CD8-positive, alpha-beta T cell (primary cell): ENCODE measurements at regions of chr12 and their contacts with region 1.

Region 1: DNA sequence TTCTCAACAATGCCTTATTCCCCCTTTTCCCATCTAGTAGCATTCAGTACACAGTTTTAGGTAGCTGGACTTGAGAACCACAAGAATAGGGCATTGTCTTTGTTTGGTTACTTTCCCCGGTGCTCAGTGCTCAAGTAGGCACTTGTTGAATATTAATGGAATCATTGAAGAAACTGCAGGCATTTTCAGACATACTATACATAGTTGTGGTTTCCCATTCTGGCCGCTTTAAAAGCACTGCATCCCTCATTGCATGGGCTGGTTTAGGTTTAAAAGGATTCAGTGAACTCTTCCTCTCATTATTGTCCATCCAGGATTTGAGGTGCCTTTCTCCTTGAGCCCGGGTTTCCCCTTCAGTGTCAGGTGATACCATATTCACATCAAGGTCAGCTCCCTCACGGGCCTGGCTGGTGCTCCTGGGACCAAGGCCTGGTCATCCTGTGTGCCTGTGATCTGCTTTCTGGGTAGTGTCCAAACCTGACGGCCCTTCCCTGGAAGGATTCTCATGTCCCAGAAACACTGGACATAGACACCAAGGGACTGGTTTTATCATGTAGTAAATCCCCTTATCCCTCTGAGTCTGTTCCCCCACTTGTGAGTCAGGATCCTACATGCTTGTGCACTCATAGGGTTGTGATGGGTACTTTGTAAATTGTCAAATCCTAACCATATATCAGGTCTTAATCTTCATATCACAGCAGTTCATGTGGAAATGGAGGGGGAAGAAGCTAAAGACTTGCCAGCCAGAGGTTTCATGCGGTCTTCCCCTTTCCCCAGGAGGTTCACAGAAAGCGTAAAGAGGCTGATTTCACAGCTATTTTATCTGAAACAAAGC is 7.4 kb downstream of the TCP11L2 start:
- DNase-seq: no peak
- ATAC-seq: no peak
- H3K4me3 ChIP-seq: no peak overlapping the region
- H3K4me3 Mint-ChIP-seq: no peak overlapping the region
- H3K27ac ChIP-seq: no peak overlapping the region
- H3K27ac Mint-ChIP-seq: peak overlapping the region; percentile 78
- H3K4me1 ChIP-seq: peaks cover 28% of the 10 kb centered on the region
- H3K4me1 Mint-ChIP-seq: peaks cover 64% of the 10 kb centered on the region
- H3K27me3 ChIP-seq: no peaks in the 10 kb centered on the region
- H3K27me3 Mint-ChIP-seq: no peaks in the 10 kb centered on the region
- CTCF ChIP-seq: no peak

Region 2: GRCh38 chr12:106345739-106346138 is 35.9 kb after region 1 on chr12:
- CTCF ChIA-PET with region 1: no interaction called
- POLR2A ChIA-PET with region 1: no interaction called
- intact Hi-C with region 1: loop called in 1 of 2 experiments (anchors 5 kb)
- DNase-seq: peak in 2 of 9 experiments; percentile 33 to 41
- ATAC-seq: peak; percentile 38
- H3K4me3 ChIP-seq: no peak overlapping the region
- H3K4me3 Mint-ChIP-seq: no peak overlapping the region
- H3K27ac ChIP-seq: no peak overlapping the region
- H3K27ac Mint-ChIP-seq: peak overlapping the region; percentile 53
- H3K4me1 ChIP-seq: no peaks in the 10 kb centered on the region
- H3K4me1 Mint-ChIP-seq: no peaks in the 10 kb centered on the region
- H3K27me3 ChIP-seq: no peaks in the 10 kb centered on the region
- H3K27me3 Mint-ChIP-seq: no peaks in the 10 kb centered on the region
- CTCF ChIP-seq: no peak

Region 3: DNA sequence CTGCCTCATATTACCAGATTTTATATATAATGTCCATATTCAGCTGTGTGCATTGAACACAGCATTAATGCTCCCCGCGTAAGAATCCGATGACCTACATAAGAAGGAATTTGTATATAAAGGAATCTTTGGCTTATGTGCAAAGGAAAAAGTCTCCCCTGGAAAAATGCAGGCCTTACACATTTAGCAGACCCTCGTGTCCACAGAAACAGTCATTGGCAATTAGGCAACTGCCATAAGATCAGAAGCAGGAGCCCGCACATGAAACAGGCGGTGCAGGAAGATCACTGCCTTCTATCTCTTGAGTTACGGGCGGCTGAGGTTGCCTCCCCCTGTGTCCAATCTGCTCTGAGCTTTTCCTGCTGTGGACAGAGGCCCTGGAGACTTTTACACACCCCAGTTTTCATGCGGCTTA is 209.7 kb after region 1 on chr12:
- CTCF ChIA-PET with region 1: no interaction called
- POLR2A ChIA-PET with region 1: no interaction called
- intact Hi-C with region 1: no loop called
- DNase-seq: no peak
- ATAC-seq: no peak
- H3K4me3 ChIP-seq: no peak overlapping the region
- H3K4me3 Mint-ChIP-seq: no peak overlapping the region
- H3K27ac ChIP-seq: no peak overlapping the region
- H3K27ac Mint-ChIP-seq: no peak overlapping the region
- H3K4me1 ChIP-seq: no peaks in the 10 kb centered on the region
- H3K4me1 Mint-ChIP-seq: no peaks in the 10 kb centered on the region
- H3K27me3 ChIP-seq: peaks cover 0 to 3% of the 10 kb centered on the region in 2 experiments
- H3K27me3 Mint-ChIP-seq: peaks cover 15% of the 10 kb centered on the region
- CTCF ChIP-seq: no peak